ENCODE measurements at regions of chr3 and their contacts with region 1.

Region 1: GRCh38 chr3:51941798-51942602 is at the starts of genes PARP3 and RRP9:
- DNase-seq: peak; percentile 100
- H3K4me3 ChIP-seq: peak within 1 kb of the TSS; percentile 66 to 81 (median 79)
- H3K27ac ChIP-seq: peak within 1 kb of the TSS; percentile 80
- H3K4me1 ChIP-seq: peaks cover 21% of the 10 kb centered on the region
- H3K27me3 ChIP-seq: no peaks in the 10 kb centered on the region
- CTCF ChIP-seq: peak; percentile 100
- POLR2A ChIP-seq: peak; percentile 73
- total RNA-seq, gene PARP3: 10.0 and 11.0 TPM in 2 replicates
- total RNA-seq, gene RRP9: 23.8 and 30.1 TPM in 2 replicates

Region 2: GRCh38 chr3:51384726-51385473 is 557.1 kb before region 1 on chr3 and contains the start of gene MANF:
- CTCF ChIA-PET with region 1: interaction called, 3 read pairs
- POLR2A ChIA-PET with region 1: no interaction called
- dilution Hi-C with region 1: no loop called
- intact Hi-C with region 1: loop called (anchors 10 kb)
- DNase-seq: peak; percentile 99
- H3K4me3 ChIP-seq: peak within 1 kb of the TSS; percentile 64 to 97 (median 93)
- H3K27ac ChIP-seq: peak within 1 kb of the TSS; percentile 95
- H3K4me1 ChIP-seq: peaks cover 29% of the 10 kb centered on the region
- H3K27me3 ChIP-seq: no peaks in the 10 kb centered on the region
- CTCF ChIP-seq: no peak
- POLR2A ChIP-seq: peak; percentile 89
- total RNA-seq, gene MANF: 248 and 254 TPM in 2 replicates

Region 3: GRCh38 chr3:51718547-51719409 is 223.2 kb before region 1 on chr3:
- CTCF ChIA-PET with region 1: no interaction called
- POLR2A ChIA-PET with region 1: no interaction called
- dilution Hi-C with region 1: no loop called
- intact Hi-C with region 1: no loop called
- DNase-seq: peak; percentile 30
- H3K4me3 ChIP-seq: no peak overlapping the region
- H3K27ac ChIP-seq: no peak overlapping the region
- H3K4me1 ChIP-seq: no peaks in the 10 kb centered on the region
- H3K27me3 ChIP-seq: no peaks in the 10 kb centered on the region
- CTCF ChIP-seq: peak; percentile 54 to 84
- POLR2A ChIP-seq: no peak

Region 4: DNA sequence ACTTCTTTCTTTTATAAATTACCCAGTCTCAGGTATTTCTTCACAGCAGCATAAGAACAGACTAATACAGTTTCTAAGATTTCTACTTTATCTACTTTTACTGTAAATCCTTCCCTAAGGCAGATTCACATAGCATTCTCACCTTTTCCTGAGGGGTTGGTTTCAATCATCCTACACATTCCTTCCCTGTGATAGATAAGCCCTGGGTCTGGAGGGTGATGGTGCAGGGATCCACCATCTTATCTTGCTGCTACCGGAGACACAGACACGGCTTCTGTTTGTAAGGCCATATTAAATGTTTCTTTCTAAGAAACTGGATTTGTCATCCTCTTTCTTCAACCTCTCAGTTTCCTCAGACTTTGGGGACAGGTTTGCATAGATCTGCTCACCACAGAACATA is 72.7 kb before region 1 on chr3:
- CTCF ChIA-PET with region 1: no interaction called
- POLR2A ChIA-PET with region 1: no interaction called
- dilution Hi-C with region 1: no loop called
- intact Hi-C with region 1: no loop called
- DNase-seq: no peak
- H3K4me3 ChIP-seq: no peak overlapping the region
- H3K27ac ChIP-seq: no peak overlapping the region
- H3K4me1 ChIP-seq: no peaks in the 10 kb centered on the region
- H3K27me3 ChIP-seq: peaks cover 2 to 7% of the 10 kb centered on the region in 2 experiments
- CTCF ChIP-seq: no peak
- POLR2A ChIP-seq: no peak

Region 5: DNA sequence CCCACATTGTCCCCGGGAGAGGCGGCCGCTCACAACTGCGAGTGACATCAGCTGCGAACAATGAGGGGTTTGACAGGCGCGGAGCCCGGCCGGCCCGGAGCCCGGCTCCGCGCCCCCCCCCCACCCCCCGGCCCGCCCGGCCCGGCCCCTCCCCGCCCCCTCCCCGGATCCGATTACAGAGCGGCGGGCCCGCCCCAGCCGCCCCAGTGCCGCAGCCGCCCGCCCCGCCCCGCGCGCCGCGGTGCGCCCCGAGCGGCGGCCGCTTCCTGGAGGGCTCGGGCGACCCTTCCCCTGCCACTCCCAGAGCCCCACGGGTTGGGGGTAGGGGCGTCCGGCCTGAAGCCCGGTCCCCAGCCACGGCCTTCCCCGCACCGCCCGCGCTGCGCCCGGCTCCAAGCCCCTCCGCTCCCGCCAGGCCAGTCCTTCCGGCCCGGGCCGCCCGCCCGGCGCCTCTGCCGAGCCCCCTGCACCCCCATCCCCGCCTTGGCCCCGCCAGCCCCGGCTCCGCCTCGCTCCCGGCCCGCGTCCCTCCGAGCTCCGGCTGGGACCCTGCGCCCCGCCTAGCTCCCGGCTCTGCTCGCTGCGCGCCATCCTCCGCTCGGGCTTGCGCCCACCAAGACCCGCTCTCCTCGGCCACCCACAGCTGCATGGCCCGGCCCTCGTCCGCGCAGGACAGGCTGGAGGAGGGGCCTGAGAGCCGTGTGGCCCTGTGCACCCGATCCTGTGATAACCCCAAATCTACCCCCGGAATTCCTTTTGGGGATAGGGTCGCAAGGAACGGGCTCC is 25.6 kb after region 1 on chr3 and contains the start of gene PCBP4:
- CTCF ChIA-PET with region 1: interaction called, 9 read pairs
- POLR2A ChIA-PET with region 1: no interaction called
- dilution Hi-C with region 1: no loop called
- intact Hi-C with region 1: loop called (anchors 1 kb)
- DNase-seq: peak; percentile 45
- H3K4me3 ChIP-seq: peak within 1 kb of the TSS; percentile 37 to 75 (median 68)
- H3K27ac ChIP-seq: peak within 1 kb of the TSS; percentile 59
- H3K4me1 ChIP-seq: peaks cover 4% of the 10 kb centered on the region
- H3K27me3 ChIP-seq: no peaks in the 10 kb centered on the region
- CTCF ChIP-seq: no peak
- POLR2A ChIP-seq: no peak
- total RNA-seq, gene PCBP4: 42.7 and 46.5 TPM in 2 replicates

Region 6: DNA sequence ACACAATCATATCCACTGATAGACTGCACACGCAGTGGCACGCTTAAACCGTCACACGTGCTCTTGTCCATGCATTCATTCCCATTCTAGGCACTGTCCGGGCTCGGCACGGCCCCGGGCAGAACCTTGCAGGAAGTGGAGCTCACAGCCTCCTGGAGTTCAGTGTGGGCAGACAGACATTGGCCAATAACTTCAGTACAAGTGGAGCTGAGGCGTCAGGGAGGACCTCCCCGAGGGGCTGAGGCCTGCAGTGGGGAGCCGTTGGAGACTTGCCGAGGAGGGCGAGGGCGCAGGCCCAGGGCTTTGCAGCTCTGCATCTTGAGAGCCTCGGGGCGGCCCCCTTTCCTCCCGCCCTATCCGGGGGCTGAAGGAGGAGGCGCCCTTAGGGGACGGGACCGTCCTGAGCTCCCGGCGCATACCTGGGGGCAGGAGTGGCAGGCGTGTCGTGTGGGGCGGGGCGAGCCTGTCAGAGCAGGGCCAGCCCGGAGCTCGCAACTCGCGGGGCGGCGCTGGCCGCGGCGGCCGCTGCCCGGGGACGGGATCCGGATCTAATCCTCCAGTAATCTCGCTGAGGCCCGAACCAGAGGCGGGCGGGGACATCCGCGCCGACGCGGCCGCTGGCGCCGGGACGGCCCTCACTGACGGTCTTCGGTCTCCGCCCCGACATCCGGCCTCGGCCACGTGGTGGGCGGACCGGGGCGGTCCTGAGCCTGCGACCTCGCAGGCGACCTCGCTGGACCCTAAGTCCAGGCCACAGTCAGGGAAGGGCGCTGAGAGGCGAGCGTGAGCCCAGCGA is 41.0 kb after region 1 on chr3 and contains the start of gene ACY1:
- CTCF ChIA-PET with region 1: interaction called, 7 read pairs
- POLR2A ChIA-PET with region 1: no interaction called
- dilution Hi-C with region 1: no loop called
- intact Hi-C with region 1: loop called (anchors 2 kb)
- DNase-seq: peak; percentile 87
- H3K4me3 ChIP-seq: peak within 1 kb of the TSS; percentile 28 to 48 (median 39)
- H3K27ac ChIP-seq: peak within 1 kb of the TSS; percentile 39
- H3K4me1 ChIP-seq: peaks cover 14% of the 10 kb centered on the region
- H3K27me3 ChIP-seq: no peaks in the 10 kb centered on the region
- CTCF ChIP-seq: no peak
- POLR2A ChIP-seq: peak; percentile 65
- total RNA-seq, gene ACY1: 12.3 and 13.4 TPM in 2 replicates

Region 7: DNA sequence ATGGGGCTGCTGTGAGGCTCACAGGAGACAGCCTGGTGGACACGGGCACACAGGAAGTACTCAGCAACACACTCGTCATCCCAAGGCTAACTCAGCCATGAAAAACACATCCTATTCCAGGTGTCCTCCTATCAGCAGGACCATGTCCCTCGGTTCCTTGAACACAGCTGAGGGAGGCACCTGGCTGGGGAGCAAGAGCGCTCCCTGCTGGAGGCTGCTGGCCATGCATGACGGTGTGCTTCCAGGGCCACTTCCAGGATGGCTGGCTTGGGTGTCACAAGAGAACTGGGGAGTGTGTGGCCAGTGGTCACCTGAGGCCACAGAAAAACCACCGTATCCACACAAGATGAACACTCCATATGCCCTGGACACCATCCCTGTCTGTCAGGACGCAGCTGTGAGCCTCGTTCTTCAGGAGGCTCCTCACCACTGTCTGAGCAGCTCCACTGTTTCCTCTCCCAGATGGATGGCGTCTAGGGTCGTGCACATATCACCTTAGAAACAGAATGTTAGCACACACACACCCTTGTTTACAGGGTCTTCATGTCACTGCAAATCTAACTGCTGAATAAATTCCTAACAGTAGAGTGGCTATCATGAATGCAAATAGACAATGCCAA is 181.2 kb after region 1 on chr3:
- CTCF ChIA-PET with region 1: no interaction called
- POLR2A ChIA-PET with region 1: no interaction called
- dilution Hi-C with region 1: no loop called
- intact Hi-C with region 1: loop called (anchors 1 kb)
- DNase-seq: peak; percentile 81
- H3K4me3 ChIP-seq: no peak overlapping the region
- H3K27ac ChIP-seq: no peak overlapping the region
- H3K4me1 ChIP-seq: peaks cover 16% of the 10 kb centered on the region
- H3K27me3 ChIP-seq: no peaks in the 10 kb centered on the region
- CTCF ChIP-seq: peak; percentile 97 to 98
- POLR2A ChIP-seq: no peak